ENCODE measurements at regions of chr7 and their contacts with region 1.

Region 1: GRCh38 chr7:64266341-64266919 is 38.2 kb downstream of the ZNF679 start:
- DNase-seq: no peak

Region 2: GRCh38 chr7:64307254-64308015 is 41.0 kb after region 1 on chr7:
- intact Hi-C with region 1: no loop called
- DNase-seq: peak; percentile 91 to 100 (median 98)

Region 3: GRCh38 chr7:64320547-64321513 is 54.4 kb after region 1 on chr7:
- intact Hi-C with region 1: loop called (anchors 5 kb)
- DNase-seq: no peak

Measured in posterior cingulate gyrus (tissue), 11 donors.